HEK293T (cell line): ENCODE measurements at regions of chr10 and their contacts with region 1.

Region 1: DNA sequence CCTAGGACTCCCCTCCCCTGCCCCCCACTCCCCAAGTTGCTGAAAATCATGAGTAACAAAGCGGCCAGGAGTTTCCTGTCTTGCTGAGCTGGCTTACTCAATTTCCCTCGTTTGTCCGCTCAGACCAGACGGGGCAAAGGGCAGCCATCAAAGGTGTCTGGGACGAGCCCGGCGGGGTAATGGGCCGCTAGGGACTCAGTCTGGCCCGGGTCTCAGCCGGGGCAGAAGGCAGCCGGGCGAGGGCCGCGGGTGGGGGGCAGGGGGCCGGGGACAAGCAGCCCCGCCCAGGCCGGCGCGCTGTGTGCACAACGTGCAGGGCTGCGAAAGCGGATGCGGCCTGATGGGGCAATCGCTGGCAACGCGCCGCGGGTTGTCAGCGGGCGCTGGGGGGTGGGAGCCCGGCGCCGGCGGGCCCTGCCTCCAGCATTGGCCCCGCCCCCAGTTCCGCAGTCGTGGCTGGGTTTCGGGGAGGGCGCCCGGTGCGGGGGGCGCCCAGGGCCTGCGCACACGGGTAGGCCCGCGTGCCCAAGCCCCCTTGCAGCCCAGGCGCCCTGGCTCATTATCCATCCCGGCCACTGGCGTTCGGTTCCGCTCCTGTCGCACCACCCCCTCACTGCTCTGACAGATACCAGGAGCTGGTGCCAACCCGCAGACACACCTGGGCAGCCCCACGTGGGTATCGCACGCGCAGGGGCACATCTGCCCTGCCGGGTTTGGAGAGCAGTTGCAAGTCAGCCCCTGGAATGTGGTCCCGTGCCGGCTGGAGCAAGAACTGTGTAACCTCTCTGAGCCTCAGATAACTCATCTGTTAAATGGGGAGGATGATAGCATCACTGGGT is 35.1 kb downstream of the DNAJB12 start:
- DNase-seq: peak; percentile 74

Region 2: GRCh38 chr10:72229261-72230251 is 90.1 kb before region 1 on chr10:
- CTCF ChIA-PET with region 1: no interaction called
- POLR2A ChIA-PET with region 1: interaction called, 11 read pairs
- DNase-seq: no peak

Region 3: DNA sequence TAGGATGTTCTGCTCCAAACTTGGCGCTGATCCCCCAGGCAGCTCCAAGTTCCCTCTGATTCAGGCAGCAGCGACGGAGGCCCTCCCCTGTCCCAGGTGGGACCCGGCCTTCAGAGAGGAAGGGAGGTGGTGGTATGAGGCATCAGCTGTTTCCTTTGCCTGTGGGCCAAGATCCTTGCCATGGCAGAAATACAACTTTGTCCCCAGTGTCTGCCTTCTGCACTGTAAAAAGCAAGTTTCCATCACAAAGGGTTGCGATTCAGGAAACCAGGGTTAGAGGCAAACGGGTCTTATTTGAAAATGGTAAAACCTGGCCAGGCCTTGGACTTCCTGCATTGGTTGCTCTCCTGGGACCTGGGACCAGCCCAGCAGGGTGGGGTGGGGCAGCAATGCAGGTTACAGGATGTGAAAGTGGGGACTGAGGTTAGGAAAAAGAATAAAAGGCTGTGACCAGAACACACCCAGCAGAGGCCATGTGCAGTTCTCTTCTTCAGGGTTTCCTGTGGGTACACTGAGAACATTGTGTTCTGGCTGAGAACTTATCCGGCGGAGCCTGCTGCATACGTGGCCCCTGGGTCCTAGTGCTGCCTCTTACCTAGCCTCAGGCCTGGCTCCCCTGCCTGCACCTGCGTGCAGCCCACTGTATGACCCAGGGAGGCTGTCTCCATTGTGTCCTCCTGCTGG is 71.0 kb before region 1 on chr10:
- CTCF ChIA-PET with region 1: interaction called, 3 read pairs
- POLR2A ChIA-PET with region 1: interaction called, 11 read pairs
- DNase-seq: peak; percentile 53

Region 4: DNA sequence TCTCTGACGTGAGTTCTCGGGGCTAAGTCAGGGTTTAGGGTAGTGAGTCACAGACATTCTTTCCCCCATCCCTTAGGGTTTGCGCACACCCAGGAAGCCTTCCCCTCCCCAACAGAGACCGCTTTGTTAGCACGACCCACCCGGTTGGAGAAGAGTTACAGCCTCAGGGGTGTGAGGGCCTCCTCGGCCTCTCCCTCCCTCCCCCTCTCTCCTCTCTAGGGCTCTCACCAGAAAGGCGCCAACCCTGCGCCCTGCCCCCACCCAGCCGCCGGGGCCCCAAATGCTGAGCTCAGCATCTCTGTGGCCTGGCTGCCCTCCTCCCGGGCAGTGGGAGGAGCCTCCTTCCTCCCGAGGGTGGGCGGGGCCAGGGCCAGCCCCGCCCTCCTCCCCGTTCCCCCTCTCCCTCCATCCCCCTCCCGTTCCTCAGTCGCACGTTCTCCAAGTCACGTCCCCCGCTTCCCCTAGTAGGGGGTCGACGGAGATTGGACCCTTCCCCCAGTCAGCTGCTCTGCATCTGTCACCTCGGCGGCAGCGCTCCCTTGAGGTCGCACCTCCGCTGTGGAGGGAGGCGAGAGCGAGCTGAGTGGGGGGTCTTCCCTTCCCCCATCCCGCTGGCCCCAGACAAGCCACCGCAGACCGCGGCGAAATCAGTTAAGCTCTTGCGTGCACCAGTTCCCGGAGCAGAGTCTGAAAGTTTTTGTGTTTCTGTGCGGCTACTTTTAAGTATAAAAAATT is 58.9 kb before region 1 on chr10:
- CTCF ChIA-PET with region 1: no interaction called
- POLR2A ChIA-PET with region 1: interaction called, 32 read pairs
- DNase-seq: peak; percentile 96

Region 5: GRCh38 chr10:72308320-72308987 is 11.2 kb before region 1 on chr10:
- CTCF ChIA-PET with region 1: interaction called, 3 read pairs
- POLR2A ChIA-PET with region 1: interaction called, 32 read pairs
- DNase-seq: no peak

Region 6: DNA sequence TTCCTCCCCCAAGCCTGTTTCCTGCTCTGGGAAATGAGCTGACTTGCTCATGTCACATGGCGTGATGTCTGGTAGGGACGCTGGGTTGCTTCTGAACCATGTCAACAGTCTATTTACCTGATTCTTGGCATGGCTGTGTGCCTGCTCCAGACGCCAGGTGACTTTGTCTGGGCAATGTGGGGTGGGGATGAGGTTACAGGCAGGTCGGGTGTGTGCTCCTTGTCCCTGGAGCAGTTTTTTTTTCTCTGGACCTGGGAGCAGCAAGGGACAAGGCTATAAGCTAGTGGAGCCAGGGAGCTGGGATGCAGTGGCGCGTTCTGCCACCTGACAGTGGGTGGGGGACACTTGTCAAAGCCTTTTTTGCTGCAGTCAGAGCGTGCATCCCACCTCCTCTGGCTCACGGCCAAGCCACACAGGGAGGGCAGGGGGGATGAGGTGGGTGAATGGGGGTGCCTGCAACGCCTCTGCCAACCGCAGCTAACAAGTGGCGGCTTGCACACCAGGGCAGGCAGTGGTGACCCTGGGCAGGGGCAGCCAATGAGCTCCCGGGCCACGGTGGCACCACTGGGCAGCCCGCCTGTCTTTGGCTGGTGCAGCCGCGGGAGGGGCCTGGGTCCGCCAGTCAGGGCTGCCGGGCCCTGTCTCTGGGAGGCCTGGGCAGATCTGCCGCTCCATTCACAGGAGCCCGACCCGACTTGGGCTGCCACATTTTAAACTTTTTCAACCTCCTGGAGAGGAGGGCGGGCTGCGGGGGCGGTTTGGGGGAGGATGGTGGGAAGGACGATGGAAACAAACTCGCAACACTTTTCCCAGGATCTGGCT is 12.2 kb after region 1 on chr10:
- CTCF ChIA-PET with region 1: no interaction called
- POLR2A ChIA-PET with region 1: interaction called, 20 read pairs
- DNase-seq: peak; percentile 68